Posterior vena cava (tissue), 2 donors: ENCODE measurements at regions of chr19 and their contacts with region 1.

Region 1: DNA sequence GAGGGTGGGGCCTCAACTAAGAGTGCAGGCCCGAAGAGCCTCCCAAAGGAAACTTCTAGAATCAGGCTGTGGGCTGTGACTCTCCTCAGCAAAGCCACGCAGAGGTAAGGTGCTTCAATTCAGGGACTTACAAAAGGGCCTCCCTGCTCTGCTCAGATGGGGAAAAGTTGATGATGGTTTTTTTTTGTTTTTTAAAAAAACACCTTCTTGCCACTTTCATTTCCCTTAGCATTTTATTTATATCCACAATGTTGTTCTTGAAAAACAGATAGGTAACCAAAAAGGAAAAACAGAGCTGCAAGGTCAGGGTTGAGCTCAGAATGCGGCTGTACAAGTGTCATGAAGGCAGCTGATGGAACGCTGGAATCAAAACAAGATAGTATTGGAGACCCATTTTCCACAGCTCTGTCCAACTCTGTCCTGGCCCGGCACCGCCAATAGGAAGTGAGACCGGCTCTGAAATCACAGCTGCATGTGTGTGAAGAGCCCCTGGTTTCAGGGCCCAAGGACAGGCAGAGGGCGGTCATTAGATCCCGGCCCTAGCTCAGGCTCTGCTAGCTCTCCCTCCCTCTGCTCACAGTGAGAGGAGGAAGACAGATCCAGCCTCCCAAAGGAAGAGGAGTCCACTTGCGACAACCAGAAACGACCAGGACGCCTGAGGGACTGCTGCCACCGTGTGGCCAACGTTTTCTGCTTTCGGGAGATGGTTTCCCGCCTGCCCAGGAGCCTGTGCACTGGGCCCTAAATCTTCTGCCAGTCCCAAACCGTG is 58.3 kb downstream of the KLF2 start:
- DNase-seq: peak; percentile 97

Region 2: DNA sequence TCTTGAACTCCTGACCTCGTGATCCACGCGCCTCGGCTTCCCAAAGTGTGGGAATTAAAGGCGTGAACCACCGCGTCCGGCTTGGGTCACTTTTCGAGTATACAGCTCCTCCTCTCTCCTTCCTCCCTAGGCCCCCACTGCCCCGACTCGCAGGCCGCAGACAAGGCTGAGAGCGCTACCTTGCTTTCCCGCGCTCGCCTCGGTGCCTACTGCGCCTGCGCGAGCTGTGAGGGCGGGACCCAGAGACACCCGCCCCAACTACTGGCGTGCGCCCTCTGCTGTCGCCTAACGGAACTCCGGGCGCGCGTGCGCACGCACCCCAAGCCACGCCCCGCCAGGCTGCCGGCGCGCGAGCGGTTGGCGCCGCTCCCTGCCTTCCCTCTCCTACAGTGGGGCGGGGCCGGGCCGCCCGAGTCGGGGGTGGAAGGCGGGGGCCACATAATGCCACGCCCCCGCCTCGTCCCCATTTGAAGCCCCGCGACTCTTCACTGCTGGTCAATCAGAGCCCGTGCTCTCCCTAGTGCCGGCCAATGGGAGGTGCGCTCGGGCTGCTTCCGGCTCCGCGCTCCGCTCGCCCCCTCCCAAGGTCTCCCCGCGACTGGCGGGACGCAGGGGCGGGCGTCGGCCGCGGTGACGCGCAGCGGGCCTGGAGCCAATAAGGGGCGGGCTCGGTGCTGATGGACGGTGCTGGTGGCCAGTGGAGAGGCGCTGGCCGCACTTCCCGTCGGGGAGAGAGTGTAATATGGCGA is 271.6 kb before region 1 on chr19 and contains the start of gene RAB8A:
- intact Hi-C with region 1: loop called in 1 of 2 experiments (anchors 2 kb)
- DNase-seq: peak; percentile 100
- total RNA-seq, gene RAB8A: 53.5 to 58.3 TPM

Region 3: DNA sequence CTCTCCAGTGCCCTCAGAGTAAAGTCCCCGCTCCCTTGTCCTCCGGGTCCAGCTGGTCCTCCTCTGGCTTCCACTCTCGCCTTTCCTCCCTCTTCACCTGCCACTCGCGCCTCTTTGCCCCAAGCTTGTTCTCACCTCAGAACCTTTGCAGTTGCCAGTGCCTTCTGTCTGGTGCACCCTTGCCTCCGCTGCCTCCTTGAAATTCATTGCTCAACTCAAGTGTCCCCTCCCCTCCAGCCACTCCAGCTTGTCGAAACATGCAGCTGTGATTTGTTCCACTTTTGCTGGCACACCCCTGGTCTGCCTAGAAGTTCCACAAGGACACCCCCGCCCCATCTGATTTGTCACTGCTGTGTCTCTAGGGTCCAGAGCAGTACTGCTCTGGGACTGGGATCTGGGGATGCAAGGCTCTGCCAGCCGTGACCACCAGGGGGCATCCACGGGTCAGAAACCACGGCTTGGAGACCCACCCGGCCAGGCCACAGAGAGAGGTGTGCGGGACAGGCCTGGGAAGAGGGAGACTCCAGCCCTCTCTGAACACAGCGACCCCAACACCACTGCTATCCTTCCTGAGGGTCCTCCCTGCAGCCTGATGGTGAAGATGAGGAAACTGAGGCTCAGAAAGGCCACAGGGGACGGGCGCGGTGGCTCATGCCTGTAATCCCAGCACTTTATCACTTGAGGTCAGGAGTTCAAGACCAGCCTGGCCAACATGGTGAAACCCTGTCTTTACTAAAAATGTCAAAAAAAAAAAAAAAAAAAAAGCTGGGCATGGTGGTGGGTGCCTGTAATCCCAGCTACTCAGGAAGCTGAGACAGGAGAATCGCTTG is 135.4 kb before region 1 on chr19:
- intact Hi-C with region 1: loop called (anchors 2 kb)
- DNase-seq: peak; percentile 96

Region 4: GRCh38 chr19:16338470-16339360 is 44.2 kb before region 1 on chr19:
- intact Hi-C with region 1: loop called (anchors 5 kb)
- DNase-seq: peak; percentile 91